PC-9 (cell line): ENCODE measurements at regions of chr11 and their contacts with region 1.

Region 1: DNA sequence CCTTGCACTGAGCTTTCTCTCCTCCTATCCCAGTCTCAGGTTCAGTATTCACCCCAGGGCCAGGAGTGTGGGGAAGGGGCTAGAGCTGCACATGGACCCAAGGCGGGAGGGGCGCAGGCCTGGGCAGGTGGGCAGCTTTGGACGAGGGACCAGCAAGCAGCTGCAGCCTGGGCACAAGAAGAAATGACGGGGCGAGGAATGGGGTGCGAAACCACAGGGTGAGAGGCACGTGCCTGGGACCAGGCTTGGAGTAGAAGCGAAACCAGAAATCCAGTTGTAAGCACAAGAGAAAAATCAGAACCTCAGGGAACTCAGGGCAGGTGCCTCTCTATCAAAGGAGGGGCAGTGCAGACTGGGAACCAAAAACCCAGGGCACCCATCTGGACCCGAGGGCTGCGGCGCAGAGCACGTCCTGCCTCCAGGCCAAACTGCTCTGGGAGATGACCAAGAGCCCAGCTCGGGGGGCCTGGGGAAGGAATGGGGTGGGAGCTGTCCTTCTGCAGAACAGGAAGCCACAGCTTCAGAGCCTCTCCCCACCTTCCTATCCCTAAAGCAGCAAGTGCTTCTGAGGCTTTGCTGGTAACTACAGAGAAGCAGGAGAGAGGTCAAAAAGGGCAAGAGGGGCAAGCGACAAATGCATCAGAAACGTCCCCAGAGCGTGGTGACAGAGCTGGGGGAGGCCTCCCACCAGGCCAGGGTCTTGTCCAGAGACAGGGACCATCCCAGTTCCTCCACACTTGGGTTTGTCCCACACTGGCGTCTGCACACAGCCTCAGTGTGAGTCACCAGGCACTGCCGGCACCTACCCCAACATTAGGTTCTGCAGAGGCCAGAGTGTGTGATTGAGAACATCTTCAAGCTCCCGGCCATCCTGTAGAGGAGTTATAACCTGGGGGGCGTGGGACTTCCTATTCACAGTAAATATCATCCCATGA is 18.3 kb upstream of the TMPRSS4 start:
- DNase-seq: peak in 1 of 2 experiments; percentile 33
- H3K4me3 ChIP-seq: no peak overlapping the region
- H3K27ac ChIP-seq: no peak overlapping the region
- H3K4me1 ChIP-seq: peaks cover 18% of the 10 kb centered on the region
- H3K27me3 ChIP-seq: peaks cover 25% of the 10 kb centered on the region
- CTCF ChIP-seq: no peak

Region 2: DNA sequence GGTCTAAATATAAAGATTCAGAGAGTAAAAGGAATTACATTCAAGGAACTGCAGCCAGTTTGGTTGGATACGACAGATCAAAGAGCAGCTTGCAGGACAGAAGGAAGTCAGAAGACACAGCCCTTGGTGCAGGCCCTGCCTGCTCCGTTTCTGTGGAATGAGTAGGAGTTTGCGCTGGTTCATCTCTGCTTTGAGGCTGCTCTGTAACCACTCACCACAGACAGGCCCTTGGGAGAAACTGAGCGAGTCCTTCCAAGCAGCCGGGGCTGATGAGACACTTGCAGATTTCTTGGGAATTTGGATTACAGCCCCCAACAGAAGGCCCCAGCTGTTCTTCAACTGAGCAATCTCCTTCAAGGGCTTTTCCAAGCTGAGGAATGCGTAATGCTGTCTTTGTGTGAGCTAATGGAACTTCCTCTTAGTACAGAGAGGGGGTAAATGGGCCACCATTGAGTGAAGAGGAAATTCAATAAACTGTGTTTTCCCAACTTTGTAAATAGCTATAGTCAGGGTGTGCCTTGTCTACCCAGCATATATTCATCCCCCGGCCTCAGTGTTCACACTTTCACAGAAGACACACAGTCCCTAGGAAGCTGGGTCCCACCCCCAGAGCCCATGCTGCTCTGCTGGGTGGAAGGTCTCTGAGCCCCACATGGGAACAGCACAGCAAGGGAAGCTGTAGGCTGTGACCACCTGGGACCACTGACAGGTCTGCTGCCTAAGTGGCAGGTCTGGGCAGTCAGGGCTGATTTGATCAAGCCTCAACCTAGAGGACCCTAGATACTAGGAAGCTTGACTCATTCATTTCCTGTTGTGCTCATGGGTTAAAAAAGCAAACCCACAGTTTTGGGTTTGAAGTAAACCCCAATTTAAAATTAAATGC is 55.8 kb before region 1 on chr11:
- CTCF ChIA-PET with region 1: no interaction called
- POLR2A ChIA-PET with region 1: no interaction called
- intact Hi-C with region 1: no loop called
- DNase-seq: peak in 1 of 2 experiments; percentile 33
- H3K4me3 ChIP-seq: no peak overlapping the region
- H3K27ac ChIP-seq: no peak overlapping the region
- H3K4me1 ChIP-seq: no peaks in the 10 kb centered on the region
- H3K27me3 ChIP-seq: peaks cover 38% of the 10 kb centered on the region; the same call in 1 of the 2 replicates
- CTCF ChIP-seq: no peak

Region 3: DNA sequence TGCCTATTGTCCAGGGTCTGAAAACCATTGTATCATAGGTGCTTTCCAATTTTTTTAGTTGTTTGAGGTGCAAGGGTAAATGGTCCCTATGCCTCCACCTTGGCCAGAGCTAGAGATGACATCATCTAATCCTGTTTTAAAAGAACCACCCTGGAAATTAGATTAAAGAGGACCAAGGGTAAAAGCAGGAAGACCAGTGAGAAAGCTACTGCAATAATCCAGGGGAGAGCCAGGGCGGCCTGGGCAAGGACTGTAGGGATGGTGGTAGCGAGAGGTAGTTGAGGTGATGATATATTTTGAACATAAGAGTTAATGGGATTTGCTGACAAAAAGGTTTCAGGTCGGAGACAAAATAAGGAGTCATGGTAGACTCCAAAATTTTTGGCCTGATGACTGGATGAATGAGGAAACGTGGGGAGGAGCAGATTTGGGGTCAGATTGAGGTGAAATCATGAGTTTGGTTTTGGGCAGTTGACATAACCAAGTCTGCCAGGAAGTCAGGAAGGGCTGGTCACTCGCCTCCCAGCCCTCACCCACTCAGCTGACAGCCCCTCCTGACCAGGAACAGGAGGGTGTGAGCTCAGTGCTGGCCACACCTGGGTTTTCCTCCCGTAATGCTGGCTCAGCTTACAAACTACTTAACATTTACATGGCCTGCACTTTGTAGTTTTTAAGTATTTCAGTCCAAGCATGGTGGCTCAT is 71.0 kb after region 1 on chr11:
- CTCF ChIA-PET with region 1: no interaction called
- POLR2A ChIA-PET with region 1: no interaction called
- intact Hi-C with region 1: loop called (anchors 5 kb)
- DNase-seq: peak in 1 of 2 experiments; percentile 59
- H3K4me3 ChIP-seq: no peak overlapping the region
- H3K27ac ChIP-seq: no peak overlapping the region
- H3K4me1 ChIP-seq: peaks cover 21% of the 10 kb centered on the region
- H3K27me3 ChIP-seq: no peaks in the 10 kb centered on the region
- CTCF ChIP-seq: no peak